Transverse colon (tissue), 4 donors: ENCODE measurements at regions of chr13 and their contacts with region 1.

Region 1: GRCh38 chr13:112270951-112271350 is 105.2 kb upstream of the SPACA7 start:
- DNase-seq: no peak
- H3K4me3 ChIP-seq: no peak overlapping the region
- H3K27ac ChIP-seq: no peak overlapping the region
- H3K4me1 ChIP-seq: no peaks in the 10 kb centered on the region
- H3K27me3 ChIP-seq: peaks cover 18% of the 10 kb centered on the region
- CTCF ChIP-seq: no peak
- EP300 ChIP-seq: no peak
- POLR2A ChIP-seq: no peak

Region 2: DNA sequence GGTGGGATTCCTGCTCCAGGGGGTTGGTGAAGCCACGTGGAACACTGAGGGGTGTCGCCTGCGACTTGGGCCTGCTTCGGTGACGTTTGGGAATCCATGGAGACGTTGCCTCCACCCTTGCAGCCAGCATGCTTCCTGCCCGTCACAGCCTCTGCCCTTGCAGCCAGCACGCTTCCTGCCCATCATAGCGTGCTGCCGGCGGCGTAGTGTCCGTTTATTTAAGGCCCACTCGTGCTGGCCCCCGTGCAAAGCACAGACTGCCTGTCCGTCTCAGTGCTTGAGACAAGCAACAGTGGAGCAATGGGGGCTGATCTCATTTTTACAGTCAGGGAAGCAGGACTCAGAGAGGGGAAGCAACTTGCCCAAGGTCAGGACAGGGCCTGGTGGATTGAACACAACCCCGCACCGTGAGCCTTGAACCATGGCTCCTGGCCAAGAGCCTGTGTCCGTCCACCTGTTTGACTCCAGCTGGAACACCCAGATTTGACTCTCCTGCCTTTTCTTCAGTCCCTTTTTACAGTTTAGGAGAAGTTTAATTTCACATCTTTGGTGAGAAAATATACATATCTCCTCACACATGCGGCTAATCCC is 800.9 kb before region 1 on chr13:
- in situ Hi-C with region 1: no loop called
- intact Hi-C with region 1: no loop called
- DNase-seq: no peak
- H3K4me3 ChIP-seq: no peak overlapping the region
- H3K27ac ChIP-seq: no peak overlapping the region
- H3K4me1 ChIP-seq: no peaks in the 10 kb centered on the region
- H3K27me3 ChIP-seq: peaks cover 10% of the 10 kb centered on the region
- CTCF ChIP-seq: no peak
- EP300 ChIP-seq: no peak
- POLR2A ChIP-seq: no peak

Region 3: DNA sequence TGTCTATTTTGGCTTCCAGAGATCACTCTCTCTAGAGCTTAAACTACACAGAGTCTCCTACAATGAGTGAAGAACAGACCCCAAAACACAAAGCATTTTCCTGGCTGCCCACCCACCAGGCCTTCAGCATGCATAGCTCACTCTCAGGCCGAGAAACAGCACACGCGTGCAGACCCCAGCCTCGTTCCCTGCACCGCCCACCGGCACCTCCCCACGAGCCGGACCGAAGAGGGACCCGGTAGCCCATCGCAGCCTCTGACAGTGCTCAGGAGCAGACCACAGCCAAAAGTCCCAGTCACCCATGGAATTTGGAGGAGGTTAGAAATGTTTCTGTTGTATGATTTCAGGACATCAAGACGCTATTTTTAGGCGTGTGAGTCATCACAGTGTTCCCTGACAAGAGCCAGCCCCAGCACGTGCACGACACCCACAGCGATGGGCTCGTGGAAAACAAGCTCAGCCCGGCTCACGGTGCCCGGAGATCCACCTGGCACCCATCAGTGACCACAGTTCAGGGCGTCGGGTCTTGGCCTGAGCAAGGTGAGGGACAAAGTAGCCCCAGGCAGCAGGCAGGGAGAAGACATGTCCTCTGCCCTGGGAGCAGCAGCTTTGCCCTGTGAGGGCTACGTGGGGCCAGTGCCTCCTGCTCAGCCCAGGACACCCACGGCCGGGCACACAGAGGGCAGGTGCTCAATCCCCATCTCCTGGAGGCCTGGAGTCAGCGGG is 55.1 kb after region 1 on chr13:
- in situ Hi-C with region 1: loop called in 3 of 4 experiments (anchors 10 kb)
- intact Hi-C with region 1: no loop called
- DNase-seq: no peak
- H3K4me3 ChIP-seq: no peak overlapping the region
- H3K27ac ChIP-seq: no peak overlapping the region
- H3K4me1 ChIP-seq: peaks cover 0 to 5% (median 0%) of the 10 kb centered on the region in 4 donors
- H3K27me3 ChIP-seq: peaks cover 18% of the 10 kb centered on the region
- CTCF ChIP-seq: no peak
- EP300 ChIP-seq: no peak
- POLR2A ChIP-seq: no peak